ENCODE measurements at regions of chr7 and their contacts with region 1.

Region 1: DNA sequence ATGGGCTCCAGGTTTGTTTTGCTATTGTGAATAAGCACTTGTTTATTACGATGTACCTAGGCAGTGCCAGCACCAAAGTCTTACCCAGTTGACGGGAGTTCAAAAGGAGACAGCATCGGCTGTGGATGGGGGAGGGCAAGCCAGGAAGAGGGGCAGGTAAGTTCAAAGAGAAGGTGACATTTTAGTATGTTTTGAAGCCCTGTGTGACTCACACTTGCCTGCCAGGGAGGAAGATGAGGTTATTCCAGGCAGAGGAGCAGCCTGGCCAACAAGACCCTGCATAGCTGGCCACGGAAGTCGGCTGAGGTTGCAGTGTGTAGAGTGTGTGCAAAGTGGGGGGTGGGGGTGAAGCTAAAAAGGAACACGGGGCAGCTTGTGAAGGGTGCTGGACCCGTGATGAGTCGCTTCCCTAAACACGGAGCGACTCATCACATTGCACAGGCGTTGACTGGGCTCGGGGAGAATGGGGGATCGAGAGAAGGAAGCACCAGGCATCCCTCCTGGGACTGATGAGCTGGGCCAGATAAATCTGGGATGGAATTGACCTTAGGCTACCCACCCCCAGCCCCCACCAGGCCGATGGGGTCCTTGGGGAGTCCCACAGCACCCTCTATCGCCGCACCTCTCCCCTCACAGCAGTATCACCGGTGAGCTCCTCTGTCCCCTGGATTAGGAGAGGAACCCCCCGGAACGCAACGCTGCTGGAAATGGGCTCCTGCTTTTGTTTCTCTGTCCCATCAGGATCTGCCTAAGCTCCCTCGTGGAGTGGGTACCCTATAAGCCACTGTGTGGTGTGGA is 97.9 kb upstream of the IKZF1 start:
- DNase-seq: peak; percentile 35 to 80 (median 63)
- ATAC-seq: peak; percentile 75 to 85 (median 80)
- H3K4me3 ChIP-seq: no peak overlapping the region
- H3K4me3 Mint-ChIP-seq: peak overlapping the region; percentile 45 to 84 (median 62)
- H3K27ac ChIP-seq: peak overlapping the region; percentile 68
- H3K27ac Mint-ChIP-seq: peak overlapping the region; percentile 88 to 95
- H3K4me1 ChIP-seq: peaks cover 55 to 66% of the 10 kb centered on the region in 2 experiments
- H3K4me1 Mint-ChIP-seq: peaks cover 76 to 84% (median 83%) of the 10 kb centered on the region in 3 donors
- H3K27me3 ChIP-seq: no peaks in the 10 kb centered on the region
- H3K27me3 Mint-ChIP-seq: no peaks in the 10 kb centered on the region

Region 2: GRCh38 chr7:50056131-50056530 is 150.5 kb before region 1 on chr7:
- CTCF ChIA-PET with region 1: no interaction called
- POLR2A ChIA-PET with region 1: no interaction called
- DNase-seq: no peak
- ATAC-seq: no peak
- H3K4me3 ChIP-seq: no peak overlapping the region
- H3K4me3 Mint-ChIP-seq: no peak overlapping the region
- H3K27ac ChIP-seq: no peak overlapping the region
- H3K27ac Mint-ChIP-seq: no peak overlapping the region
- H3K4me1 ChIP-seq: no peaks in the 10 kb centered on the region
- H3K4me1 Mint-ChIP-seq: peaks cover 0 to 2% (median 0%) of the 10 kb centered on the region in 3 donors
- H3K27me3 ChIP-seq: no peaks in the 10 kb centered on the region
- H3K27me3 Mint-ChIP-seq: peaks cover 8 to 18% of the 10 kb centered on the region in 2 donors

Region 3: DNA sequence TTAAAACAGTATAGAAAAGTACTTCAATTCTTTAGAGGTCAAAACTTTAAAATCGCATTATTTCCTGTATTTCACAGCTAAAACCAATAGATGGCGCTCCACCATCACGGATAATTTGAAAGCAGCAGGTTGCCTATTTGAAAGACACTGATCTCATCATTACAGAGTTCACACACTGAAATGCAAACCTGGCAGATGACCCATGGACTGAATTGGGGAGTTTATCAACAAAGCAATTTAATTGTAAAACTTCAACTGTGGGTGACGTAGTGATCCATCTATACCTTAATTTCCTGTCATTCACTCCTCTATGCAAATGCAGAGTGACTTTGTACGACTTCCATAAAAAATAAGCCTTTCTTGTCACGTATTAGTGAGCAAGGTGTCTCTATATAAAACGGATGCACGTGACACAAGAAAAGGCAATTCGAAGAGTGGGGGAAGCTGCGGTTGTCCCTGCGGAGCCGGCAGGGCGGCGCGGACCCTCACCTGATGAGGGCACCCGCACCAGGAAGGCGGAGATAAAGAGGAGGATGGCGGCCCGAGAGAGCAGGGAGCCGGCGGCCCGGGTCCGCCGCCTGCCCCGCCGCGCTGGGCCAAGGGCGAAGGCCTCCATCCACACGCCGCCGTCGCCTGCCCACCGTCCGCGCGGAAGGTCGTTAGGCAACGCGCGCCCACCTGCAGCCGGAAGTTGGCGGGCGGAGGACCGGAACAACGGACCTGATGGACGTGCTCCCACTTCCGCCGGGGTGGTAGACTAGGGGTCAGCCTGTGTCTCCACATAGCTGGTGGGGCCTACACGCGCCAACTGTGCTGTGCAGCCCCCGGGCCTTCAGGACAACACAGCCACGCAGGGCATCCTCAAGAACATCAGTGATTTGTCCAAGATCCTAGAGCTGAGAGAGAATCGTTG is 113.8 kb before region 1 on chr7 and contains the start of gene ZPBP:
- CTCF ChIA-PET with region 1: interaction called, 5 to 12 read pairs
- POLR2A ChIA-PET with region 1: no interaction called
- DNase-seq: peak in 32 of 35 experiments; percentile 8 to 82 (median 40)
- ATAC-seq: peak; percentile 71 to 80 (median 79)
- H3K4me3 ChIP-seq: peak within 1 kb of the TSS; percentile 55 to 56
- H3K4me3 Mint-ChIP-seq: peak within 1 kb of the TSS; percentile 87 to 90 (median 87)
- H3K27ac ChIP-seq: peak within 1 kb of the TSS; percentile 45
- H3K27ac Mint-ChIP-seq: peak within 1 kb of the TSS; percentile 66 to 80
- H3K4me1 ChIP-seq: peaks cover 2 to 4% of the 10 kb centered on the region in 2 experiments
- H3K4me1 Mint-ChIP-seq: peaks cover 8 to 17% (median 15%) of the 10 kb centered on the region in 3 donors
- H3K27me3 ChIP-seq: peaks cover 0 to 2% of the 10 kb centered on the region in 2 experiments
- H3K27me3 Mint-ChIP-seq: no peaks in the 10 kb centered on the region
- total RNA-seq, gene ZPBP: 0.46 TPM in 1 of 5 donors, not detected in the others

Region 4: GRCh38 chr7:50266635-50267386 is 60.2 kb after region 1 on chr7:
- CTCF ChIA-PET with region 1: interaction called, 4 to 11 read pairs
- POLR2A ChIA-PET with region 1: no interaction called
- DNase-seq: peak; percentile 53 to 85 (median 70)
- ATAC-seq: peak; percentile 85 to 89 (median 86)
- H3K4me3 ChIP-seq: peak overlapping the region; percentile 12 to 17
- H3K4me3 Mint-ChIP-seq: peak overlapping the region; percentile 67 to 87 (median 70)
- H3K27ac ChIP-seq: peak overlapping the region; percentile 87
- H3K27ac Mint-ChIP-seq: peak overlapping the region; percentile 98 to 100
- H3K4me1 ChIP-seq: peaks cover 85 to 87% of the 10 kb centered on the region in 2 experiments
- H3K4me1 Mint-ChIP-seq: peaks cover 95 to 98% (median 96%) of the 10 kb centered on the region in 3 donors
- H3K27me3 ChIP-seq: no peaks in the 10 kb centered on the region
- H3K27me3 Mint-ChIP-seq: no peaks in the 10 kb centered on the region

Region 5: GRCh38 chr7:50317221-50317678 is 110.6 kb after region 1 on chr7:
- CTCF ChIA-PET with region 1: interaction called, 5 to 22 read pairs
- POLR2A ChIA-PET with region 1: no interaction called
- DNase-seq: peak in 30 of 35 experiments; percentile 44 to 90 (median 66)
- ATAC-seq: peak; percentile 67 to 79 (median 69)
- H3K4me3 ChIP-seq: peak overlapping the region in 1 of 2 donors; percentile 35
- H3K4me3 Mint-ChIP-seq: peak overlapping the region; percentile 81 to 98 (median 95)
- H3K27ac ChIP-seq: peak overlapping the region; percentile 87
- H3K27ac Mint-ChIP-seq: peak overlapping the region in 1 of 2 donors; percentile 100
- H3K4me1 ChIP-seq: peaks cover 67 to 84% of the 10 kb centered on the region in 2 experiments
- H3K4me1 Mint-ChIP-seq: peaks cover 97% of the 10 kb centered on the region in 3 donors
- H3K27me3 ChIP-seq: no peaks in the 10 kb centered on the region
- H3K27me3 Mint-ChIP-seq: no peaks in the 10 kb centered on the region

Region 6: GRCh38 chr7:50342616-50343114 is 136.0 kb after region 1 on chr7:
- CTCF ChIA-PET with region 1: interaction called, 6 to 13 read pairs
- POLR2A ChIA-PET with region 1: interaction called in 1 of 2 experiments, 3 read pairs
- DNase-seq: peak in 29 of 35 experiments; percentile 39 to 84 (median 63)
- ATAC-seq: peak; percentile 31 to 62 (median 38)
- H3K4me3 ChIP-seq: peak overlapping the region in 1 of 2 donors; percentile 12
- H3K4me3 Mint-ChIP-seq: peak overlapping the region in 2 of 3 donors; percentile 62 to 67
- H3K27ac ChIP-seq: peak overlapping the region; percentile 88
- H3K27ac Mint-ChIP-seq: no peak overlapping the region
- H3K4me1 ChIP-seq: peaks cover 85 to 88% of the 10 kb centered on the region in 2 experiments
- H3K4me1 Mint-ChIP-seq: peaks cover 27 to 92% (median 57%) of the 10 kb centered on the region in 3 donors
- H3K27me3 ChIP-seq: no peaks in the 10 kb centered on the region
- H3K27me3 Mint-ChIP-seq: no peaks in the 10 kb centered on the region

Region 7: DNA sequence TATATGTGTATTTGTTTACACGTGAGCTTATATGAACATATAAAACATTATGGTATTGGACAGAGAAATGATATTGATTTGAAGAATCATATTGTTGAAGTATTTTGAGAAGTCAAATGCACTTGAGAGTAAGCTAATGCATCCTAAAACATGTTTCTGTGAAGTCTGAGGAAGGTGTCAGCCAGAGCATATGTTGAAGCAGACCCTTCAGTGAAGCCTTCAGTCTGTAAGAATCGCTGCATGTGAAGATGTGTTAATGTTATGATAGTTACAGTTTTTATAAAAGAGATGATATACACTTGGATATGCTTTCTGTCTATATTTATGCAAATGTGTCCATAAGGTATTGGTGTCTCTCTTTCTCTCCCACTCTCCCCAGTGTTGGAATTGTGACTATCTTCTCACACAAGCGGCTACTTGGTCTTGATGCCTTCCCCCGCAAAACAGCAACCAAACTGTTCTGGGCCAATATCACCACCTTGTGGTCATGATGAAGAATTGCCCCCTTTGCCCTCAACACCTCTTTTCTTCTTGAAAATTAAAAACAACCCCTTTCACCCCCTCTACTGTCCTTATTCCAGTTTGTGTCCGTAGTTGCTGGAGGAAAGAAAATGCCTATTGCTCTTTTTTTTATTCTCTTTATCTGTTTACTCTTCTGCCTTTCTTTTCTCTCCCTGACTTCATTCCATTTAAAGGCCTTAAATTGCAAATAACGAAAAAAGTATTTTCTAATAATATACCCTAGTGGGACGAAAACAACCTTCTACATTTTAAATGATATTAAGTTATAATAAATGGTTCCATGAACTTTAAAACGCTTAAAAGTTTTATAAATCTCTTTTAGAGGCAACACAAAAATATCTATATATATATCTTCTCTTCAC is 162.7 kb after region 1 on chr7:
- CTCF ChIA-PET with region 1: interaction called, 49 to 103 read pairs
- POLR2A ChIA-PET with region 1: interaction called in 1 of 2 experiments, 3 read pairs
- DNase-seq: peak in 25 of 35 experiments; percentile 32 to 92 (median 53)
- ATAC-seq: peak; percentile 48 to 64 (median 51)
- H3K4me3 ChIP-seq: no peak overlapping the region
- H3K4me3 Mint-ChIP-seq: peak overlapping the region in 2 of 3 donors; percentile 4 to 49
- H3K27ac ChIP-seq: peak overlapping the region; percentile 96
- H3K27ac Mint-ChIP-seq: peak overlapping the region; percentile 89 to 99
- H3K4me1 ChIP-seq: peaks cover 69 to 80% of the 10 kb centered on the region in 2 experiments
- H3K4me1 Mint-ChIP-seq: peaks cover 98 to 99% (median 98%) of the 10 kb centered on the region in 3 donors
- H3K27me3 ChIP-seq: no peaks in the 10 kb centered on the region
- H3K27me3 Mint-ChIP-seq: no peaks in the 10 kb centered on the region

Region 8: DNA sequence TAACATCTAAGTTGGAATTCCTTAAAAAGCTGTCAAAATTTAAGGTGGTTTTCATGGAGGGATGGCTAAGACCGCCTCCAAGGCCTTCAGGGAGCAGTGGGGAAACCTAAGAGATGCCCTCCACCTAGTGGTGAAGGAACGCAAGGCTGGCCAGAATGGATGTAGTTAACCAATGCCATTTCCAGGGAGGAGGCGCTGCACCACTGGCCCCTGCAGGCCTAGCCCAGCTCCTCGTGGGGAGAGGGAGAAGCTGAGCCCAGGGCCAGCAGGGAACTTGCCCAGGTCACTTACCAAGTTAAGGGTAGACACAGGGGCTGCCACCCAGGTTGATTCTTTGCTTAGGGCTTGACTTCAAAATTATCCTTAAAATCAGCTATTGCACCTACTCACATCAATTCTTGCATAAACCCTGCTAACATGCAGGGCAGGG is 211.4 kb after region 1 on chr7:
- CTCF ChIA-PET with region 1: interaction called, 11 to 19 read pairs
- POLR2A ChIA-PET with region 1: no interaction called
- DNase-seq: peak; percentile 28 to 84 (median 56)
- ATAC-seq: peak; percentile 84 to 92 (median 90)
- H3K4me3 ChIP-seq: no peak overlapping the region
- H3K4me3 Mint-ChIP-seq: no peak overlapping the region
- H3K27ac ChIP-seq: no peak overlapping the region
- H3K27ac Mint-ChIP-seq: no peak overlapping the region
- H3K4me1 ChIP-seq: peaks cover 8 to 18% of the 10 kb centered on the region in 2 experiments
- H3K4me1 Mint-ChIP-seq: peaks cover 24 to 34% (median 25%) of the 10 kb centered on the region in 3 donors
- H3K27me3 ChIP-seq: no peaks in the 10 kb centered on the region
- H3K27me3 Mint-ChIP-seq: no peaks in the 10 kb centered on the region

Measured in T-cell (primary cell).